Natural killer cell (primary cell): ENCODE measurements at regions of chr19 and their contacts with region 1.

Region 1: DNA sequence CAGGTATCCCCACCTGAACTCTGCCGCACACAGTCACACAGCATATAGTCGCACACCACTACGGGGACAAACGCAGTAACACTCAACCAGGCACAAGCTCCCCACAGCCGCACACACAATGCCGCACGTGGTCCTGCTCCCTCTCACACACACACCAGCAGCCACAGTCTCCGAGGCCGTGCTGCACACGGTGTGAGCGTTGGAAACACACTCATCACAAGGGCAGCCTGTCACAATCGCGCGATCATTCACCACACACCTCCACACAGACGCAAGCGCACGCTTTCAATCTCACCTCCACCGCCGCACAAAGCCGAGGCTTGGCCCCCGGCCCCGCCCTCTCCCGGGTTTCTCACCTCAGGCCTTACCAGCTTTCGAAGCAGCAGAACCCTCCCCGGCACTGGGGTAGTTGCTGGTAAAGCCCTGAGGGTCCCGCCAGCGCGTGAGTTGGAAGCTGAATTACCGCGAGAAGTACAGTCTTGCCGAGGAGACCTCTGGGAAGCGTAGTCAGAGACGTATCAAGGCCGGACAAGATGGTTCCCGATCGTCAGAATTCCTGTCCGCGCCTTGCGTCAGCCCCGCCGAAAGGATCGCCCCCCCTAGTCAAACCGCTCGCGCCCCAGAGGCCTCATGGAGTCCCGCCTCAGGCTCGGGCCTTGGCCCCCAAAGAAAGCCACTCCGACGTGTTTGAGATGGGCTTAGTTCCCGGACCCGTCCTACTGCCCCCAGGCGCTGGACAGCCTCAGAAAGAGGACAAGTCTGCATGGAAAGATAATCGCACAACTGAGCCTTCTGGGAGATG is at the start of gene ZNF566:
- DNase-seq: peak; percentile 84 to 96
- ATAC-seq: peak; percentile 83 to 94 (median 90)
- H3K4me3 ChIP-seq: peak within 1 kb of the TSS; percentile 69
- H3K4me3 Mint-ChIP-seq: peak within 1 kb of the TSS; percentile 99
- H3K27ac ChIP-seq: peak within 1 kb of the TSS; percentile 85
- H3K27ac Mint-ChIP-seq: peak within 1 kb of the TSS; percentile 97 to 100
- H3K4me1 ChIP-seq: peaks cover 14% of the 10 kb centered on the region
- H3K4me1 Mint-ChIP-seq: peaks cover 29 to 31% of the 10 kb centered on the region in 2 donors
- H3K27me3 ChIP-seq: no peaks in the 10 kb centered on the region
- H3K27me3 Mint-ChIP-seq: no peaks in the 10 kb centered on the region
- CTCF ChIP-seq: no peak
- total RNA-seq, gene ZNF566: 7.9 to 16.0 (median 12.4) TPM

Region 2: DNA sequence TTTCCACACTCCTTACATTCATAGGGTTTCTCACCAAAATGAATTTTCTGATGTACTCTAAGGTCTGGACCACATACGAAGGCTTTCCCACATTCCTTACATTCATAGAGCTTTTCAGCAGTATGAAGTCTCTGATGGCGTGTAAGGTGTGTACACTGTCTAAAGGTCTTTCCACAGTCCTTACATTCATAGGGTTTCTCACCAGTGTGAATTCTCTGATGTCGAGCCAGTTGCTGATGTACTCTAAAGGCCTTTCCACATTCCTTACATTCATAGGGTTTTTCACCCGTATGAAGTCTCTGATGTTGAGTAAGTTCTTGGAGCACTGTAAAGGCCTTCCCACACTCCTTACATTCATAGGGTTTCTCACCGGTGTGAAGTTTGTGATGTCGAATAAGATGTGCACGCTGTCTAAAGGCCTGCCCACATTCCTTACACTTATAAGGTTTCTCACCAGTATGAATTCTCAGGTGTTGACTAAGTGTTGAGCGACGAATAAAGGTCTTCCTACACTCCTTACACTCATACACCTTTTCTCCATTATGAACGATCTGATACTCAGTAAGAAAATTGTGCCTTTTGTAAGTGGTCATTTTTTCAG is 148.4 kb before region 1 on chr19:
- intact Hi-C with region 1: no loop called
- DNase-seq: no peak
- ATAC-seq: no peak
- H3K4me3 ChIP-seq: no peak overlapping the region
- H3K4me3 Mint-ChIP-seq: no peak overlapping the region
- H3K27ac ChIP-seq: no peak overlapping the region
- H3K27ac Mint-ChIP-seq: no peak overlapping the region
- H3K4me1 ChIP-seq: no peaks in the 10 kb centered on the region
- H3K4me1 Mint-ChIP-seq: no peaks in the 10 kb centered on the region
- H3K27me3 ChIP-seq: no peaks in the 10 kb centered on the region
- H3K27me3 Mint-ChIP-seq: no peaks in the 10 kb centered on the region
- CTCF ChIP-seq: no peak

Region 3: DNA sequence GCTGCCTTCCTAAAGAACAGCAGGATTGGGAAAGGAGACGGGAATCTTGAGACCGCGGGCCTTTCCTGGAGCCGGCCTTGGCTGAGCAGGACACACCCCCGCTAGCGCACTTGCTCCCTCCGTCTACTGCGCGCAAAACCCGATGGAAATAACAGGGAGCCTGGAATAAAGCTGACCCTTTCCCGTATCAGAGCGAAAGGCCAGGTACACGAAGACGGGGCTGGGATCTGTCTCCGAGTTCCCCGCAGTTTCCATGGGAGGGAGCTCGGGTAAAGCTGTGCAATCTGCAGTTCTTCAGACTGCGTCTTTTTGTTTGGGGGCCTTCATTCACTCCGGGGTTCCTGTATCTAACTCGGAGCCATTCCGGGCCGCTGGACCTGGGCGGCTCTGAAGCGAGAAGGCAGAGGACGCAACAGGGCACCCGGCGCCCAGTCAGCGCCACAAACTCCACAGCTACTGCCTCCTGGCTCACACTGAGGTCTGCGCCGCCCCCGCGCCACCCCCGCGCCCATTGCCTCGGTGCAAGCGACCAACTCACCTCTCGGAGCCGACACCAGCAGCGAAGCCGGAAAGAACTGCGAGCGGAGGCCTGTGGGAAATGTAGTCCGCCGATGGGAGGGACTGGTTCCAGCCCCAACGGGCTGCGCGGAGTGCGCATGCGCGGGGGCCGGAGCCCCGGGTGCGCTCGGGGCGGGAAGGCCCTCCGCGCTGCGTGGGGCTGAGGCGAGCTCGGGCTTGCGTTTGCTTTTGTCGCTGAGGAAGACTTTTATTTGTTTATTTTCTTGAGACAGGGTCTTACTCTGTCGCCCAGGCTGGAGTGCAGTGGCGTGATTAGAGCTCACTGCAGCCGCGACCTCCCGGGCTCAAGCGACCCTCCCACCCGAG is 110.5 kb before region 1 on chr19 and contains the start of gene ZFP14:
- intact Hi-C with region 1: loop called (anchors 1 kb)
- DNase-seq: peak; percentile 91 to 97
- ATAC-seq: peak; percentile 98
- H3K4me3 ChIP-seq: peak within 1 kb of the TSS; percentile 81
- H3K4me3 Mint-ChIP-seq: peak within 1 kb of the TSS; percentile 88
- H3K27ac ChIP-seq: peak within 1 kb of the TSS; percentile 89
- H3K27ac Mint-ChIP-seq: peak within 1 kb of the TSS; percentile 89 to 98
- H3K4me1 ChIP-seq: peaks cover 10% of the 10 kb centered on the region
- H3K4me1 Mint-ChIP-seq: peaks cover 18 to 23% of the 10 kb centered on the region in 2 donors
- H3K27me3 ChIP-seq: no peaks in the 10 kb centered on the region
- H3K27me3 Mint-ChIP-seq: no peaks in the 10 kb centered on the region
- CTCF ChIP-seq: no peak
- total RNA-seq, gene ZFP14: 7.4 to 8.2 (median 7.8) TPM

Region 4: GRCh38 chr19:36547001-36547732 is 57.8 kb after region 1 on chr19:
- intact Hi-C with region 1: no loop called
- DNase-seq: peak in 1 of 2 donors; percentile 7
- ATAC-seq: no peak
- H3K4me3 ChIP-seq: no peak overlapping the region
- H3K4me3 Mint-ChIP-seq: no peak overlapping the region
- H3K27ac ChIP-seq: no peak overlapping the region
- H3K27ac Mint-ChIP-seq: no peak overlapping the region
- H3K4me1 ChIP-seq: no peaks in the 10 kb centered on the region
- H3K4me1 Mint-ChIP-seq: no peaks in the 10 kb centered on the region
- H3K27me3 ChIP-seq: no peaks in the 10 kb centered on the region
- H3K27me3 Mint-ChIP-seq: no peaks in the 10 kb centered on the region
- CTCF ChIP-seq: no peak

Region 5: DNA sequence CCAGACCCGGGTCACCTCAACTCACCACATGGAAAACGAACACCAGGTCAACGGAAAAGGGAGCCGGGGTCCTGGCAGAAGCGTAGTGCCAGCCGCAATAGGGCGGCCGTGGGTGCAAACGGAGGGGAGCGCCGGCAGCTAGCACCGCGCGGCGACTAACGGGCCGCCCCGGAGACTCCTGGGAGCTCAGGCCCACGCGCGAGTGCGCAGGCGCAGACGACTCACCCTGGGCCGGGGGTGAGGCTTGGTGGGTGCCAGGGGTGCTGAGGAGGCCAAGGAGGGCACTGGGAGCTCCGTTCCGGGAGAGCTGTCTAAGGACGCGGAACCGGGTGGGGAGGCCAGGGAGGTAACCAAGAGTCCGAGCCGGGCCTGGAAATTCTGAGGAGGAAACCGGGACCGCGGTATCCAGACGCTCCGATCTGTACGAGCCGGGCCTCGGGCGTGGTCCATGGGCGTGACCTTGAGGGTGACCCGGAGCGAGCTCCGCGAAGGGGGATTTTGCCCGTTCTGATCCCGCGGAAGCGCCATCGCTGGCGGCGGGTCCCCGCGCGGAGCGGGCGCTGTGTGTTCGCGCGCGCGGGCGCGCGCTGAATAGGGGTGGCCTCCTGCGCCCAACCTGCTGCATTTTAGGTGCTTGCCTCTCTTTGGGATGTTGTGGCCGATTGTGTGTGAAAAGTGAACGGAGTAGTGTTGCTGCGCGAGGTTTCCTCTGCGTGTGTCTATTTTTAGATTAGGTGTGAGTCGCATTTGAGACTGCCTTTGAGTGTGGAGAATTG is 116.0 kb after region 1 on chr19 and contains the start of gene ZNF382:
- intact Hi-C with region 1: loop called (anchors 1 kb)
- DNase-seq: peak; percentile 75 to 92
- ATAC-seq: peak; percentile 51 to 81 (median 62)
- H3K4me3 ChIP-seq: peak within 1 kb of the TSS; percentile 78
- H3K4me3 Mint-ChIP-seq: peak within 1 kb of the TSS; percentile 81
- H3K27ac ChIP-seq: peak within 1 kb of the TSS; percentile 90
- H3K27ac Mint-ChIP-seq: peak within 1 kb of the TSS; percentile 80 to 89
- H3K4me1 ChIP-seq: peaks cover 20% of the 10 kb centered on the region
- H3K4me1 Mint-ChIP-seq: peaks cover 20 to 28% of the 10 kb centered on the region in 2 donors
- H3K27me3 ChIP-seq: no peaks in the 10 kb centered on the region
- H3K27me3 Mint-ChIP-seq: no peaks in the 10 kb centered on the region
- CTCF ChIP-seq: no peak
- total RNA-seq, gene ZNF382: 3.2 to 8.1 (median 4.2) TPM

Region 6: GRCh38 chr19:36687214-36688056 is 198.1 kb after region 1 on chr19 and contains the start of gene ZNF567:
- intact Hi-C with region 1: loop called (anchors 5 kb)
- DNase-seq: peak; percentile 92 to 98
- ATAC-seq: peak; percentile 91 to 96 (median 95)
- H3K4me3 ChIP-seq: peak within 1 kb of the TSS; percentile 90
- H3K4me3 Mint-ChIP-seq: peak within 1 kb of the TSS; percentile 98
- H3K27ac ChIP-seq: peak within 1 kb of the TSS; percentile 80
- H3K27ac Mint-ChIP-seq: peak within 1 kb of the TSS; percentile 93 to 99
- H3K4me1 ChIP-seq: peaks cover 18% of the 10 kb centered on the region
- H3K4me1 Mint-ChIP-seq: peaks cover 28 to 39% of the 10 kb centered on the region in 2 donors
- H3K27me3 ChIP-seq: no peaks in the 10 kb centered on the region
- H3K27me3 Mint-ChIP-seq: no peaks in the 10 kb centered on the region
- CTCF ChIP-seq: no peak
- total RNA-seq, gene ZNF567: 5.6 to 11.8 (median 10.5) TPM